Left ventricle myocardium superior (tissue), 1 donor: ENCODE measurements at regions of chr4 and their contacts with region 1.

Region 1: GRCh38 chr4:119628308-119629141 is at the start of gene PDE5A:
- DNase-seq: peak; percentile 87
- ATAC-seq: peak; percentile 89
- total RNA-seq, gene PDE5A: 7.6 TPM

Region 2: GRCh38 chr4:118981839-118982381 is 646.6 kb before region 1 on chr4:
- intact Hi-C with region 1: no loop called
- DNase-seq: no peak
- ATAC-seq: peak; percentile 73

Region 3: GRCh38 chr4:119525005-119525749 is 103.3 kb before region 1 on chr4:
- intact Hi-C with region 1: no loop called
- DNase-seq: no peak
- ATAC-seq: no peak

Region 4: DNA sequence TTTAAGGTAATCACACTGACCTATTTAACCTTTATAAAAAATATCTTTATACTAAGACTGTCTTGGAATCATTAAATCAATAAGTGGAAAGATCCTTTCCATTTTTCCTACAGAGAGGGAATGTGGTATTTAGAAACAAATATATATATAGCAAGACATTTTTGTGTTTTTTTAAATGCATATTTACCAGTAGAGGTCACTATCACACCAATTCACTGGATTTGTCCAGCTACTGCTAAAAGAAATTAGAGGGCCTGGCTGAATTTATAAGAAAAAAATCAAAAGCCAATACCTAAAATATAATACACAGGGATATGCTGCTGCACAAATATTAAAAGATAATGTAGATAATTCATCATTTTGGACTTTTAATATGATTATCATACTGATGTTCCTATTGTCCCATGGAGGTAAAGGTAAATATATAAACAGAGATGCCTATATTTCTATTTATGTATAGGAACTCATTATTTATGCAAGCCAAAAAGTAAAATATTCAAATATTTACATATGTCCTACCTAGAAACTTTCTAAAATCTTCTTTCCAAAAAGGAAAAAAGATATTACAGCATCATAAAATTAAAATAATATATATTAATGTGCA is 69.4 kb before region 1 on chr4:
- intact Hi-C with region 1: loop called (anchors 5 kb)
- DNase-seq: no peak
- ATAC-seq: no peak